Activated naive CD4-positive, alpha-beta T cell treated with anti-CD3 and anti-CD28 coated beads for 36 hours (primary cell): ENCODE measurements at regions of chr13 and their contacts with region 1.

Region 1: GRCh38 chr13:46603165-46603603 is 50.2 kb downstream of the LRCH1 start:
- DNase-seq: no peak
- H3K4me3 Mint-ChIP-seq: no peak overlapping the region
- H3K27ac Mint-ChIP-seq: no peak overlapping the region
- H3K4me1 Mint-ChIP-seq: peaks cover 78% of the 10 kb centered on the region
- H3K27me3 Mint-ChIP-seq: no peaks in the 10 kb centered on the region

Region 2: GRCh38 chr13:46468570-46469463 is 134.4 kb before region 1 on chr13:
- CTCF ChIA-PET with region 1: no interaction called
- intact Hi-C with region 1: no loop called
- DNase-seq: no peak
- H3K4me3 Mint-ChIP-seq: no peak overlapping the region
- H3K27ac Mint-ChIP-seq: no peak overlapping the region
- H3K4me1 Mint-ChIP-seq: no peaks in the 10 kb centered on the region
- H3K27me3 Mint-ChIP-seq: no peaks in the 10 kb centered on the region

Region 3: DNA sequence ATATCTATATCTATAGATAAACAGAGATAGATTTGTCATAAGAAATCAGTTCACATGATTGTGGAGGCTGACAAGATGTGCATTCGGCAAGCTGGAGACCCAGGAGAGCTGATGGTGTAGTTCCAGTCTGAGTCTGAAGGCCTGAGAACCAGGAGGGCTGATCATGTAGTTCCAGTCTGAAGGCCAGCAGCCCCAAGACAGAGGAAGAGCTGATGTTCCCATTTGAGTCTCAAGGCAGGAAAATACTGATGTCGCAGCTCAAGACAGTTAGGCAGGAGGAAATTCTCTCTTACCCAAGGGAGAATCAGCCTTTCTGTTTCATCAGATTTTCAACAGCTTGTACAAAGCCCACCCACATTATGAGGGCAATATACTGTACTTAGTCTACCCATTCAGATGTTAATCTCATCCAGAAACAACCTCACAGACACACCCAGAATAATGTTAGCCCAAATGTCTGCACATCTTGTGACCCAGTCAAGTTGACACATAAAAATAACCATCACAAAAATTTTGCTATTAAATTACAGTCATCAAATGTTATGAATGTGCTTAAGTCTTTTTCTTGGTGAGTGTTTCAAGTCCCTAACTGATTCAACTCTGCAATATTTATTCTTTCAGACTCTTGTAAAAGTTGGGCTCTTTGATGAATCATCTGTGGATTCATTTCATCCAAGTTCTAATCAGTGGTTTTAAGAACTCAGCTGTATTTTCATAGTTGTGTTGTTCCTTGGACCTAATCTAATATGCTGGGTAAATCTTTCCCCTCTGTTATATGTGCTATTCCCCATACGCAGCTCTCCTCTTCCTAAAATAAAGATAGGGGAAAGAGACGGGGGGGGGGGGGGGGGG is 72.9 kb before region 1 on chr13:
- CTCF ChIA-PET with region 1: no interaction called
- intact Hi-C with region 1: loop called (anchors 2 kb)
- DNase-seq: no peak
- H3K4me3 Mint-ChIP-seq: no peak overlapping the region
- H3K27ac Mint-ChIP-seq: no peak overlapping the region
- H3K4me1 Mint-ChIP-seq: peaks cover 23% of the 10 kb centered on the region
- H3K27me3 Mint-ChIP-seq: peaks cover 2% of the 10 kb centered on the region

Region 4: DNA sequence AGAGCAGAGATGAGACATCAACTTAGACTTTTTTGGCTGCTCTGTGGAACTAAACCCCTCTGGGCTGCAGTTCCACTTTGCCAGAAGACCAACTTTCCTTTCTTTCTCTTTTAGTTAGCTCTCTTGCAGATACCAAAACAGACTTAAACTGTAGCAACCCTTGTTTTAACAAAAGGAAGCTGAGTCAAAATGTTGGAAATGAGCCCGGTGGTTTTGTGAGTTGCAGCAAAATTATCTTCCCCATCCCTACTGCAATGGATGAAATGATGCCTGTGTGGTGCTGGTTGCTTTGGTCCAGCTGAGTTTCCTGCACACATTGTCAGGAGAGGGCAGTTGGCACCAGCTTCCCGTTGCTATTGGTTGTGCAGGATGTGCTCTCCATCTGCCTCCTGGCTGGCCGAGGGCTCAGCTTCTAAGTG is 65.1 kb after region 1 on chr13:
- CTCF ChIA-PET with region 1: no interaction called
- intact Hi-C with region 1: loop called (anchors 2 kb)
- DNase-seq: peak; percentile 58
- H3K4me3 Mint-ChIP-seq: peak overlapping the region; percentile 72
- H3K27ac Mint-ChIP-seq: peak overlapping the region; percentile 85
- H3K4me1 Mint-ChIP-seq: peaks cover 37% of the 10 kb centered on the region
- H3K27me3 Mint-ChIP-seq: no peaks in the 10 kb centered on the region

Region 5: DNA sequence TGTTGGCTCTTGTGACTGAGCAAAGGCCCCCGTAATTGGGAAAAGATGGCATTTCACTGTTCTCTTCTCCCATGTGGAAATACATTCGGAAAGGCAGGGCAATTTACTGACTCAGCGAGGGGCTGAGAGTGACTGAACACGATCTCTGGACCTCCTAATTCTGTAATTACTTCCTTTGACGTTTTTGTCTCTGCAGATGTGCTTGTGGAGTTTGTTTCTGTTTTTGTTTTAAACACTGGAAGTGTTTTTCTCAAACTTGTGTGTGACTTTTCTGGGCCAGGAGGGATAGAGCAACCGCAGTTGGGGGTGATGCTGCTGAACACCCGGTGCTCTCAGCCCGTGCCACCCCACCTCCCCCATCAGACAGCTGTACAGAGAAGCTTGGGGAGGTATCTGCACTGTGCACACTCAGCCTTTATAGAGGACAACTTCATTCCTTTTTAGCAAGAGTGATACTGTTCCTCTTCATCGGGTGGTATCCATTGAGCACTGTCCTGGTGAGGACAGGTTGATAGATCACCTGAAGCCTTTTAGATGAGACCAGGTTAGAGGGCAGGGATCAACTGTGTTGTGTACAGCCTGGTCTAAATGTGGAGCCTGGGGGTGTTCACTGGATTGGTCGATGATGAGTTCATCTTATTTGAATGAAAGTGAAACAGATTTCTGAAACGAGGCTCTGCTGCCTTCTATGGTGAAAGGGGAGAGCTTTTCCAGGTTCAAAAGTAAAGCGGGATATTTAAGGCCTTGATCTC is 76.4 kb after region 1 on chr13:
- CTCF ChIA-PET with region 1: no interaction called
- intact Hi-C with region 1: loop called (anchors 2 kb)
- DNase-seq: peak; percentile 45
- H3K4me3 Mint-ChIP-seq: no peak overlapping the region
- H3K27ac Mint-ChIP-seq: no peak overlapping the region
- H3K4me1 Mint-ChIP-seq: peaks cover 16% of the 10 kb centered on the region
- H3K27me3 Mint-ChIP-seq: no peaks in the 10 kb centered on the region

Region 6: GRCh38 chr13:46855166-46855565 is 252.0 kb after region 1 on chr13:
- CTCF ChIA-PET with region 1: no interaction called
- intact Hi-C with region 1: no loop called
- DNase-seq: no peak
- H3K4me3 Mint-ChIP-seq: no peak overlapping the region
- H3K27ac Mint-ChIP-seq: no peak overlapping the region
- H3K4me1 Mint-ChIP-seq: no peaks in the 10 kb centered on the region
- H3K27me3 Mint-ChIP-seq: peaks cover 4% of the 10 kb centered on the region

Region 7: GRCh38 chr13:46961719-46962118 is 358.5 kb after region 1 on chr13:
- CTCF ChIA-PET with region 1: no interaction called
- intact Hi-C with region 1: no loop called
- DNase-seq: peak; percentile 8
- H3K4me3 Mint-ChIP-seq: no peak overlapping the region
- H3K27ac Mint-ChIP-seq: no peak overlapping the region
- H3K4me1 Mint-ChIP-seq: no peaks in the 10 kb centered on the region
- H3K27me3 Mint-ChIP-seq: no peaks in the 10 kb centered on the region

Region 8: DNA sequence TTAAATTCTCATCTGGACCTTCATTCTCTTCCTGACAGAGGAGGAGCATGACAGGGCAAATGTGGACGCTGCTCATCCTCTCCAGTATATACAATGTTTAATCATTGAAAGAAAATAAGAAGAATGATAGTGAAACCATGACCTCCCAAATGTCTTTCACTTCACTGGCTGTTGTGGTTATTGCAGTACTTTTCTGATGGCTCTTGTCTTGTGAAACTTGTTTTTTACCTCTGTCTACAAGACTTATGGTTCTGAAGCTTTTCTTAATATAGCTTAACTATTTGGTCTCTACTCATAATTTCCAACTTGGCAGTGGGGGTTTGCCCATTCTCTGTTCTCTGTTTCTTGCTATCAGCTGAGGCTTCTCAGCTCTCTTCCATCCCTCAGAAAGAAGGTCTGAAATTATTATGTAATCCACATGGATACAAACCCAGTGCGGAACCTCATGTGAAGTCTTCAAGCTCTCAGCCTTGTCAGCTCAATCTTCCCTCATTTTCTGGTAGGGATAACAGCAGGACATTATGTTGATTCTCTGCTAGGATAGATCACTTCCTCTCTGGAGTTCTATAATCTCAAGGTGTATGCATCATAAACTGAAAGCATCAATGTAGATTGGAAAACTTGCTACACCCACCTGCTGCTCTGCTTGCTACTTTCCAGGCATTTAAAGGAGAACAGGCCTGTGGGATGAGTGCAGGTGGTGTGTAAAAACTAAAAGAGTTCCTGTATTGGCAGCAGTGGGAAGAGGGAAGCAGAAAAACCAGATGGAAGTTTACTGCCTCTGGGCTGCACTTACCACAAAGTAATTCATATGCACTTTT is 544.0 kb after region 1 on chr13:
- CTCF ChIA-PET with region 1: no interaction called
- intact Hi-C with region 1: no loop called
- DNase-seq: no peak
- H3K4me3 Mint-ChIP-seq: no peak overlapping the region
- H3K27ac Mint-ChIP-seq: no peak overlapping the region
- H3K4me1 Mint-ChIP-seq: no peaks in the 10 kb centered on the region
- H3K27me3 Mint-ChIP-seq: no peaks in the 10 kb centered on the region